PC-3 (cell line): ENCODE measurements at regions of chr18 and their contacts with region 1.

Region 1: GRCh38 chr18:60053747-60054304 is 154.0 kb downstream of the PMAIP1 start:
- DNase-seq: peak; percentile 100
- ATAC-seq: peak; percentile 93
- H3K4me3 ChIP-seq: peak overlapping the region; percentile 42
- H3K27ac ChIP-seq: peak overlapping the region; percentile 97
- H3K4me1 ChIP-seq: peaks cover 36% of the 10 kb centered on the region
- H3K27me3 ChIP-seq: no peaks in the 10 kb centered on the region
- CTCF ChIP-seq: no peak

Region 2: GRCh38 chr18:59744271-59744721 is 309.5 kb before region 1 on chr18:
- CTCF ChIA-PET with region 1: no interaction called
- POLR2A ChIA-PET with region 1: no interaction called
- intact Hi-C with region 1: no loop called
- DNase-seq: peak; percentile 92
- ATAC-seq: peak; percentile 79
- H3K4me3 ChIP-seq: no peak overlapping the region
- H3K27ac ChIP-seq: peak overlapping the region; percentile 86
- H3K4me1 ChIP-seq: peaks cover 45% of the 10 kb centered on the region
- H3K27me3 ChIP-seq: no peaks in the 10 kb centered on the region
- CTCF ChIP-seq: no peak

Region 3: DNA sequence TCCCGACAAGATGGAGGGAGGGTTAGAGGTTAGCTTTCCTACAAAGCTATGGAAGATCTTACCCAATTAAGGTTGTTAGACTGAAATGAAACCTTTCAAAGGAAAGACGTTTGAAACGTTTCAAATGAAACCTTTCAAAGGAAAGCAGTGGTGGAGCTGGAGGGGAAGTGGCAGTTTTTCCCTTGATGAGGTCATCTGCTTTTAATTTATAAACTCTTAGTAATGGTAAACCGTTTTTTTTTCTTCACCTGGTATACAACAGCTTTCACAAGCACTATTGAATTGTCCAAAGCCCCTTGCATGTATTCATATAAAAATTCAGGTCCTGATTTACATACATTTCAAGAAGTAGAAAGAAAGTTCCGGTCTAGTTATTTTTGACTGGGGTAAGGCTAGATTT is 146.7 kb before region 1 on chr18:
- CTCF ChIA-PET with region 1: no interaction called
- POLR2A ChIA-PET with region 1: no interaction called
- intact Hi-C with region 1: loop called (anchors 5 kb)
- DNase-seq: no peak
- ATAC-seq: no peak
- H3K4me3 ChIP-seq: no peak overlapping the region
- H3K27ac ChIP-seq: no peak overlapping the region
- H3K4me1 ChIP-seq: peaks cover 52% of the 10 kb centered on the region
- H3K27me3 ChIP-seq: no peaks in the 10 kb centered on the region
- CTCF ChIP-seq: no peak

Region 4: DNA sequence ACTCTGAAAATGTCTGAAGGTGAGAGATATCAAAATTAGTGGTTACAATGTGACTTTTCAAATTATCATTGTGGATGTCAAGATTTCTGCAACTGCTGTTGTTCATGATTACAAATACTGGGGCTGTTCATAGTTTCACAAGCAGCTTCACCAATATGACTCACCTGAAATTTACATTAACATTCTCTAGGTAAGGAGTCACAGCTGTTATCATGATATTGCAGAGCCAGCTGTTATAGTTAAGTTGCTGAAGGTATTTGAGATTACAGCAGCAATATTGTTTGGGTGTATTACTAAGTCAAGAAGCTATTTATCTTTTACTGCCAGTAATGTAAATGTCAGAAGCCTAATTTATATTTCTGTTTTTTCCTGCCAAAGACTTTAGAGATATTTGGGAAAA is 178.7 kb after region 1 on chr18:
- CTCF ChIA-PET with region 1: no interaction called
- POLR2A ChIA-PET with region 1: no interaction called
- intact Hi-C with region 1: loop called (anchors 2 kb)
- DNase-seq: peak; percentile 89
- ATAC-seq: peak; percentile 97
- H3K4me3 ChIP-seq: no peak overlapping the region
- H3K27ac ChIP-seq: peak overlapping the region; percentile 22; the same call in 1 of the 2 replicates
- H3K4me1 ChIP-seq: peaks cover 24% of the 10 kb centered on the region
- H3K27me3 ChIP-seq: no peaks in the 10 kb centered on the region
- CTCF ChIP-seq: no peak